AG04449 (cell line): ENCODE measurements at regions of chr2 and their contacts with region 1.

Region 1: DNA sequence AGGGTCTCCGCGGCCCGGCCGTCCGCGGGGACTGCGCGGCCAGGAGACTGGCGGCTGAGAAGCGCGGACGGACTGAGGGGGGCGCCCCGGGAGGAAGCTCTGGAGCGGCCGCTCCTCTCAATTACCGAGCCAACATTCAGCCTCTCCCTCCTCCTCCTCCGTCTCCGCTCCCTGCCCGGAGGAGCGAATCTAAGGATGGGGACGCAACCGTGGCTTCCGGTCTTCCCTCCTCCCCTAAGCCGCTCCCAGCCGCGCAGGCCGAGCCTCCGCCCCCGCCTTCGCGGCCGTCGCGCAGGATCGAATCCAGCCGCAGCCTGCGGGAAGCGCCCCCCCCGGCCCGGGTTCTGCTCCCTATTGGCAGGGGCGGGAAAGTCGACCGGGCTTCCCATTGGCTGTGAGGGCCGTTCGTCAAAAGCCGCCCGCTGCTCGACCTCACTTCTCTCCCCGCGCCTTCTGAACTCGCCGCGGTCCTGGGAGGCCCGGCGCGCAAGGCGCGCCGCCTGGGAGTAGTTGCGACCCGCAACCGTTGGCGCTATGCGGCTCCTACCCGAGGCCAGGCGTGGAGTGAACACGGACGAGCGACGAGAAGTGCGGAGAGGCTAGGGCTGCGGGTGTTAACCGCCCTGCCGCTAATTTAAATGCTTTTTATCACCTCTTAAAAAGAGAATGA is at the start of gene HNRNPLL:
- DNase-seq: peak; percentile 77
- H3K4me3 ChIP-seq: peak within 1 kb of the TSS; percentile 84
- CTCF ChIP-seq: peak; percentile 17

Region 2: DNA sequence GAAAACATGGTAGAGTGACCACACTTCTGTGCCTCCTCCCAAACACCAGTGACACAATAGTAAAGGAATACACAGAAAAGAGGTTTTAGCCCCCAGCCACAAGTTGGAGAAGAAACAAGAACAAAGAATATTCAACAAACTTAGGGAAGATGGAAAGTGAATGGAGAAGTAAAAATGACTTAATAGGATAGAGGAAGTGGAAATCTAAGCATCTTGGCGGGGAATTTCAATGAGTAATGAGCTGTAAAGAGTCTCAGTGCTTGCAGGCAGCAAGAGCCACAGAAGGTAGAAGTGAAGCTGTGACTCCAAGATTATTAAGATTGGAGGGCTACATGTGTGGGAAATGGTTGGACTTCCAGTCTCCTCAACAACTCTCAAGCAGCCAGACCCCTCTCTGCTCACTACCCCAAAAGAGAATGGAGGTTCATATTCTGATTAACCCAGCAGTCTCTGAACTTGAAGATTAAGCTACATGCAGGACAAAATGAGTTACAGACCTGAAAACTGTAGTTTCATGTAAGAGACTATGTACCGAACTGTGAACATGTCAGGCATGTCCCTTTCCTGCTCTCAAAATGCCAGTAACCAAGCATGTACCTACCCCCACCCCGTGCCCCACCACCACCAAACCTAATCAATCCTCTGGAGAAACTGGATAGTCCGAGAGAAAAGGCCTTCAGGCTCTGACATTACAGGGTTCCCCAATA is 16.7 kb after region 1 on chr2:
- CTCF ChIA-PET with region 1: interaction called, 22 read pairs
- POLR2A ChIA-PET with region 1: no interaction called
- DNase-seq: no peak
- H3K4me3 ChIP-seq: no peak overlapping the region
- CTCF ChIP-seq: no peak

Region 3: DNA sequence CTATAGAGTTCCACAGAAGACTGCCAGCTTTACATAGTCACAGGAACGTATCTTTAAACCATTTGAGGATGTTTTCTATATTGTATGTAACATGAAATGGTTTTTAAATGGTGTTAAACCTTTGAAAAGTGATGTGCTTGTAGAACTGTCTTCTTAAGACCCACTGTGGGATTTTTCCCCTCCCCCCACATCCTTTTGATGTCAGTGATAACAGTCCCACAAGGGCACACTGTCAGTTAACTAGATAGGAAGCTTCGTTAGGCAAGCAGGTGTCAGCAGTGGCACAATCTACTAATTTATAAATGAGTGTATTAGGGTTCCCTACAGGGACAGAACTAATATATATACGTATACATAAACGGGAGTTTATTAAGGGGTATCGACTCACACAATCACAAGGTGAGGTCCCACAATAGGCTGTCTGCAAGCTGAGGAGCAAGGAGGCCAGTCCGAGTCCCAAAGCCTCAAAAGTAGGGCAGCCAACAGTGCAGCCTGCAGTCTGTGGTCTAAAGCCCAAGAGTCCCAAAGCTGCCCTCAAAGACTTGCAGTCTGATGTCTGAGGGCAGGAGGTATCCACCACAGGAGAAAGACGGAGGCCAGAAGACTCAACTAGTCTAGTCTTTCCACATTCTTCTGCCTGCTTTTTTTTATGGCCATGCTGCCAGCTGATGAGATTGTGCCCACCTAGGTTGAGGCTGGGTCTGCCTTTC is 23.6 kb after region 1 on chr2:
- CTCF ChIA-PET with region 1: interaction called, 12 read pairs
- POLR2A ChIA-PET with region 1: no interaction called
- DNase-seq: no peak
- H3K4me3 ChIP-seq: no peak overlapping the region
- CTCF ChIP-seq: no peak

Region 4: GRCh38 chr2:38665854-38666555 is 63.1 kb after region 1 on chr2 and contains the start of gene GALM:
- CTCF ChIA-PET with region 1: interaction called, 12 read pairs
- POLR2A ChIA-PET with region 1: no interaction called
- DNase-seq: peak; percentile 47
- H3K4me3 ChIP-seq: peak within 1 kb of the TSS; percentile 58
- CTCF ChIP-seq: no peak

Region 5: DNA sequence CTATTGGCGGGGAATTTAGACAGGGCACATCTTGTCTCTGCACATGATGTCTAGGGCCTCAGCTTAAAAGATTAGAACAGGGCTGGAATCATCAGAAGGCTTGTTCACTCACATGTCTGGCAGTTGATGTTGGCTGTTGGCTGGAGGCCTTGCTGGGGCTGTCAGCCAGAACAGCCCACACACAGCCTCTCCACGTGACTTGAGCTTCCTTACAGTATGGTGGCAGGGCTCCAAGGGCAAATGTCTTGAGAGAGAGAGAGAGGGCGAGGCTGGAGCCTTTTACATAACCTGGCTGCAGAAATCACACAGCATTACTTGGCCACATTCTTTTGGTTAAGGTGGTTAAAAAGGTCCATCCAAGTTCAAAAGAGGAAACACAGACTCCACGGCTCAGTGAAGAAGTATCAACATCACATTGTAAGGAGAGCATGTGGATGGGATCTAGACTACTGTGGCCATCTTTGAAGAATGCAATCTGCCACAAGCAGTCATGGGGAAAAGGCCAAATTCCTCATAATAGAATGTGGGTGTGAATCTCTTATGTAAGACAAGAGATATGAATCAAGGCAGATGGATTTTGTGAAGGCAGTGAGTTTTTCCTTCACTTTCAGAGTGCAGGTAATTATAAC is 117.9 kb after region 1 on chr2:
- CTCF ChIA-PET with region 1: interaction called, 70 read pairs
- POLR2A ChIA-PET with region 1: no interaction called
- DNase-seq: peak; percentile 59
- H3K4me3 ChIP-seq: no peak overlapping the region
- CTCF ChIP-seq: no peak

Region 6: DNA sequence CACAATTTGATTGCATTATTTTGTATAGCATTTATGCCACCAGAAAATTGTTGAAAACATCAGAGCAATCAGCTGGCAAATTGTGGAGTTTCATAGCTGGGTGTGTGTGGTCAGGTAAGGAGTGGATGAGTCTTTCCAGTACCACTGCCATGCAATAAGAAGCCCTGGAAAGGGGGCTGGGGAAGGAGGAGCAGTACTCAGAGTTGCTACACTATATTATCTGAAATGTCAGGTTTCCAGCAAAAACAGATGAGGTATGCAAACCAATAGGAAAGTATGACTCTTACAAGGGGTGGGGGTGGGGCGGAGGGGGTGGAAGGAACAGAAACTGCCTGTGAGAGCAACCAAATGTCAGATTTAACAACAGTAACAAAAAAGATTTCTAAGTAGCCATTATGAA is 405.8 kb after region 1 on chr2:
- CTCF ChIA-PET with region 1: no interaction called
- POLR2A ChIA-PET with region 1: no interaction called
- DNase-seq: no peak
- H3K4me3 ChIP-seq: no peak overlapping the region
- CTCF ChIP-seq: no peak